Activated CD8-positive, alpha-beta T cell treated with anti-CD3 and anti-CD28 coated beads, Interleukin-2, amount 10 ng/mL, durations not matched to agents 7 days and 5 days (primary cell): ENCODE measurements at regions of chr5 and their contacts with region 1.

Region 1: DNA sequence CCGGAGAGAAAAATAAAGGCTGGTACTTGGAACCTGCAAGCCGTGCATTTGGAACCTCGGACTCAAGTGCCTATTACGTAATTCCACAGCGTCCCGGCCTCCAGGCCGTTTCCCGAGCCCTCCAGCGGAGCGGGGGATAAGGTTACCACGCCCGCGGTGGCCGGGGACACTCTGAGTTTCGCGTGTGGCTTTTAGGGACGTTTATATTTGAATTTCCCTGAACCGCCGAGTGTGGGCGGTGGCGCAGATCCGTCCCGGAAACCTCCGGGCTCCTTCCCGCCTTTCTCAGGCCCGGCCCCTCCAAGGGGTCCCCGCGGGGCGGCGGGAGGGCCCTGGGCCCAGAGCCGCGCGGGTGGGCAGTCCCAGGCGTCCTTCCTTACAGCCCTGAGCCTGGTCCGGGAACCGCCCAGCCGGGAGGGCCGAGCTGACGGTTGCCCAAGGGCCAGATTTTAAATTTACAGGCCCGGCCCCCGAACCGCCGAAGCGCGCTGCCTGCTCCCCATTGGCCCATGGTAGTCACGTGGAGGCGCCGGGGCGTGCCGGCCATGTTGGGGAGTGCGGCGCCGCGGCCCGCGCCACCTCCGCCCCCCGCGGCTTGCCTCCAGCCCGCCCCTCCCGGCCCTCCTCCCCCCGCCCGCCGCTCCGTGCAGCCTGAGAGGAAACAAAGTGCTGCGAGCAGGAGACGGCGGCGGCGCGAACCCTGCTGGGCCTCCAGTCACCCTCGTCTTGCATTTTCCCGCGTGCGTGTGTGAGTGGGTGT is at the start of gene LMNB1:
- DNase-seq: peak; percentile 97
- ATAC-seq: peak; percentile 75
- H3K4me3 Mint-ChIP-seq: peak within 1 kb of the TSS; percentile 96
- H3K27ac Mint-ChIP-seq: peak within 1 kb of the TSS; percentile 98
- H3K4me1 Mint-ChIP-seq: peaks cover 39% of the 10 kb centered on the region
- H3K27me3 Mint-ChIP-seq: no peaks in the 10 kb centered on the region
- total RNA-seq, gene LMNB1: 384 to 396 TPM

Region 2: GRCh38 chr5:126600631-126601511 is 175.8 kb before region 1 on chr5 and contains the start of gene PHAX:
- CTCF ChIA-PET with region 1: interaction called, 6 read pairs
- POLR2A ChIA-PET with region 1: interaction called, 13 read pairs
- DNase-seq: peak; percentile 79
- ATAC-seq: peak; percentile 95
- H3K4me3 Mint-ChIP-seq: peak within 1 kb of the TSS; percentile 96
- H3K27ac Mint-ChIP-seq: peak within 1 kb of the TSS; percentile 97
- H3K4me1 Mint-ChIP-seq: peaks cover 33% of the 10 kb centered on the region
- H3K27me3 Mint-ChIP-seq: no peaks in the 10 kb centered on the region
- total RNA-seq, gene PHAX: 33.7 to 35.0 TPM

Region 3: GRCh38 chr5:126615286-126615685 is 161.4 kb before region 1 on chr5:
- CTCF ChIA-PET with region 1: no interaction called
- POLR2A ChIA-PET with region 1: no interaction called
- DNase-seq: no peak
- ATAC-seq: no peak
- H3K4me3 Mint-ChIP-seq: no peak overlapping the region
- H3K27ac Mint-ChIP-seq: no peak overlapping the region
- H3K4me1 Mint-ChIP-seq: no peaks in the 10 kb centered on the region
- H3K27me3 Mint-ChIP-seq: no peaks in the 10 kb centered on the region

Region 4: GRCh38 chr5:126676195-126676624 is 100.5 kb before region 1 on chr5:
- CTCF ChIA-PET with region 1: interaction called, 250 read pairs
- POLR2A ChIA-PET with region 1: interaction called, 132 read pairs
- DNase-seq: peak; percentile 81
- ATAC-seq: peak; percentile 77
- H3K4me3 Mint-ChIP-seq: no peak overlapping the region
- H3K27ac Mint-ChIP-seq: peak overlapping the region; percentile 47
- H3K4me1 Mint-ChIP-seq: peaks cover 23% of the 10 kb centered on the region
- H3K27me3 Mint-ChIP-seq: no peaks in the 10 kb centered on the region

Region 5: DNA sequence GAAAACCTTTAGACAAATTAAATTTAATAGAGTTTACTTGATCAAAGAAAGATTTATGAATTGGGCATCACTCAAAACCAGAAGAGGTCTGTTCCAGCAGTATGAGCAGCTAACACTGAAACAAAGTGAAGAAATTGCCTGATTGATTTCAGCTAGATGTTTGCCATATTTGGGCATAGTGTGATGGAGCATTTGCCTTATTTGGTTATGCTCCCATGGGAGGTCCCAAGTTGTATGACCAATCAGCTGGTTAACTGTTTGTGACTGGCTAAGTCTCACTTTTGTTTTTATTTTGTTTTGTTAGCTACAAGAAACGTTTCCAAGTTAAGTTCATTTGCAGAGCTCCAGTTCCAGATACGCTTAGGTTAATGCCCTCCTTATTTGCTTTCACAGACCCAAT is 53.0 kb before region 1 on chr5:
- CTCF ChIA-PET with region 1: interaction called, 5 read pairs
- POLR2A ChIA-PET with region 1: interaction called, 49 read pairs
- DNase-seq: no peak
- ATAC-seq: no peak
- H3K4me3 Mint-ChIP-seq: no peak overlapping the region
- H3K27ac Mint-ChIP-seq: no peak overlapping the region
- H3K4me1 Mint-ChIP-seq: no peaks in the 10 kb centered on the region
- H3K27me3 Mint-ChIP-seq: peaks cover 3% of the 10 kb centered on the region

Region 6: GRCh38 chr5:126745259-126745992 is 31.3 kb before region 1 on chr5:
- CTCF ChIA-PET with region 1: interaction called, 72 read pairs
- POLR2A ChIA-PET with region 1: interaction called, 97 read pairs
- DNase-seq: no peak
- ATAC-seq: no peak
- H3K4me3 Mint-ChIP-seq: no peak overlapping the region
- H3K27ac Mint-ChIP-seq: no peak overlapping the region
- H3K4me1 Mint-ChIP-seq: peaks cover 31% of the 10 kb centered on the region
- H3K27me3 Mint-ChIP-seq: peaks cover 3% of the 10 kb centered on the region

Region 7: DNA sequence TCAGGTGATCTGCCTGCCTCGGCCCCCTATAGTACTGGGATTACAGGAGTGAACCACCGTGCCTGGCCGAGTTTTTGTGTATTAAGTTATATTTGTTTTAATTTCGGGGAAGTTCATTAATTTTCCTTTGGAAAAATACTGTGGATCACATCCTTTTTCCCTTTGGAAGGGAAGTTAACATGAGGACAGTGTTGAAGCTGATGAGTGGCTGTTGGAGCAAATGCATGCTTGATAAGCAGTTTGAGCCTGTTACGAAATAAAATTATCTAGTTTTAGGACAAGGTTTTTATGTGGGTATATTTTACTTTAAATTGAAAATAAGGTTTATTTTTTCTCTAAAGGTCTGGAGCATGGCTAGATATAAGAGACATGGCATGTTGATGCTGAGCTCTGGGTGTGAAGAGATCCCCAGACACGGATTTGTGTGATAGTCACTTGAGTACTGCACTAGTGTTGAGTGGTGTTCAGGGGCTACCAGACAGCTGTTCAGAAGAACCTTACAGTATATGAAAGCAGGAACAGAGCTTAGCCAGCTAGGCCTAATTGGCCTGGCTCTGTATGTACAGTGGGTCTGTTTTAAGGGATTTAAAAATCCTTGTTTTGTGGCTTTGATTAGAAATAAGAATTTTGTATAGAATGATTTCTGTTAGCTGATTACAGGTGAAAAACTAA is 17.6 kb after region 1 on chr5:
- CTCF ChIA-PET with region 1: interaction called, 11 read pairs
- POLR2A ChIA-PET with region 1: interaction called, 10 read pairs
- DNase-seq: no peak
- ATAC-seq: no peak
- H3K4me3 Mint-ChIP-seq: no peak overlapping the region
- H3K27ac Mint-ChIP-seq: no peak overlapping the region
- H3K4me1 Mint-ChIP-seq: peaks cover 59% of the 10 kb centered on the region
- H3K27me3 Mint-ChIP-seq: no peaks in the 10 kb centered on the region

Region 8: GRCh38 chr5:126811515-126812198 is 35.0 kb after region 1 on chr5:
- CTCF ChIA-PET with region 1: interaction called, 6 read pairs
- POLR2A ChIA-PET with region 1: interaction called, 16 read pairs
- DNase-seq: no peak
- ATAC-seq: peak; percentile 66
- H3K4me3 Mint-ChIP-seq: peak overlapping the region; percentile 2
- H3K27ac Mint-ChIP-seq: peak overlapping the region; percentile 83
- H3K4me1 Mint-ChIP-seq: peaks cover 36% of the 10 kb centered on the region
- H3K27me3 Mint-ChIP-seq: no peaks in the 10 kb centered on the region